PC-9 (cell line): ENCODE measurements at regions of chr16 and their contacts with region 1.

Region 1: DNA sequence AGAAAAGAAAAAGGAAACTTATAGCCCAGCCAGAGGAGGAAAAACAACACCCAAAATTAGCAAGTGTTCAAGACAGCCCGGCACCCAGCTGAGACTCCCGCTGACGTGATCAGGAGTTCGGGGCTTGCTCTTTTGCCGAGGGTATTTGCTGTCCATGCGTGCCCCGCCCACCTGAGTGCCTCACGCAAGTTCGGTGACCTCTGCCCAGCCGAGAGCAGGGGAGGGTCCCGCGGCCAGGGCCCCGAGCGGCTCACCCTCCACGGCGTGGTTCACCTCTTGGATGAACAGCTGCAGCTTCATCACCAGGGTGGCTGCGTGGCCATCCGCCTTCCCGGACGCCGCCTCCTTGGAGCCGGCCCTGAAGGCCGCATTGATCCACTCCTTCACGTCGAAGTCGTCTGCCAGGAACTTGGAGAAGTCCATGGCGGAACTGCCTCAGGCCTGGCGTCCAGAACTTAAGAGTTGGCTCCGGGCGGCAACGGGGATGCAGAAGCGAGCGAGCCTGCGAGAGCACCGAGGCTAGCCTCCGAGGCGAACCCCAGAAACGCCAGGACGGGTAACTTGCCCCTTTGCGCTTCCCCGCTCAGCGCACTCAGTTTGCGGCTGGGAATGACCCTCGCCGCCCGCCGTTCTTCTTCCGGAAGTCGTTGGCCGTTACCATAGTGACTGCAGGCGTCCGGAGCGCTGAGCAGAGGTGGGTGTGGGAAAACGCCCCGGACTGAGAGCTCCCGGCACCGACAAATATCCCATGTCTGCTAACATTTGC is at the start of gene COG7:
- DNase-seq: peak; percentile 71 to 90
- H3K4me3 ChIP-seq: peak within 1 kb of the TSS; percentile 97
- H3K27ac ChIP-seq: peak within 1 kb of the TSS; percentile 43
- H3K4me1 ChIP-seq: peaks cover 24% of the 10 kb centered on the region
- H3K27me3 ChIP-seq: no peaks in the 10 kb centered on the region
- CTCF ChIP-seq: no peak
- total RNA-seq, gene COG7: 38.3 and 40.7 TPM in 2 replicates

Region 2: DNA sequence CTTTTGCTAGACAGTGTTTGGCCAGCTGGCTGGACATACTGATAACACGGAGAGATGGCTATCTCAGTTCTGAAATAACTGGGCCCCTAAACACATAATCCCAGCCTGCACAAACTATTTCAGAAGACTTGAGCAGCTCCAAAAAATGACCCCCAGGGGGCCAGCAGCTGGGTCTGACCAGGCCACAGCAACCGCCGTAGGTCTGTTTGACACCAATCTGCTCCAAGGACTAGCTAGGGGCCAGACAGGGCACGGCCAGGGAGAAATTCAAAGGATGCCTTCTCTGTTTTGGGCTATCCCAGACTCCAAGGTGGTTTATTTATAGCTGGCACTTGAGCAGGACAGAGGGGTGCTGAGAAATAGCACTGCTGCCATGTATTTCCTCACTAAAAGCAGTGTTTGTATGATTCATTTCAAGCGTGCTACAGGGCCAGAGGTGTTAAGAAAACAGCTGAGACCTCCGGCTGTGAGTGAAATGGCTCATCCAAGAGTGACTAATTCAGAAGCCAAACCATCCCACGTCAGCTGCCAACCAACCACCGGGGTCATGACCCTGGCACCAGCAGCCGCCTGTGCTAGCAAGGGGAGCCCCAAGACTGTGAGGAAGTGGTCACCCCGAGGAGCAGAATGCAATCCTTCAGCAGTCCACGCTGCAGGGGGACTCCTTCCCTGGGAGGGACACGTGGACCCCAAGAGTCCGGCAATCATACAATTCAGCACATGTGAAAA is 51.9 kb after region 1 on chr16:
- CTCF ChIA-PET with region 1: no interaction called
- POLR2A ChIA-PET with region 1: no interaction called
- intact Hi-C with region 1: loop called (anchors 5 kb)
- DNase-seq: peak; percentile 72 to 92
- H3K4me3 ChIP-seq: no peak overlapping the region
- H3K27ac ChIP-seq: no peak overlapping the region
- H3K4me1 ChIP-seq: peaks cover 31% of the 10 kb centered on the region
- H3K27me3 ChIP-seq: no peaks in the 10 kb centered on the region
- CTCF ChIP-seq: no peak

Region 3: GRCh38 chr16:23556881-23557778 is 104.4 kb after region 1 on chr16 and contains the starts of genes EARS2 and UBFD1:
- CTCF ChIA-PET with region 1: no interaction called
- POLR2A ChIA-PET with region 1: no interaction called
- intact Hi-C with region 1: loop called (anchors 1 kb)
- DNase-seq: peak; percentile 94 to 100
- H3K4me3 ChIP-seq: peak within 1 kb of the TSS; percentile 98
- H3K27ac ChIP-seq: peak within 1 kb of the TSS; percentile 79
- H3K4me1 ChIP-seq: peaks cover 26% of the 10 kb centered on the region
- H3K27me3 ChIP-seq: no peaks in the 10 kb centered on the region
- CTCF ChIP-seq: peak; percentile 89
- total RNA-seq, gene EARS2: 34.9 and 43.3 TPM in 2 replicates
- total RNA-seq, gene UBFD1: 95.8 and 98.2 TPM in 2 replicates